ENCODE measurements at regions of chr7 and their contacts with region 1.

Region 1: DNA sequence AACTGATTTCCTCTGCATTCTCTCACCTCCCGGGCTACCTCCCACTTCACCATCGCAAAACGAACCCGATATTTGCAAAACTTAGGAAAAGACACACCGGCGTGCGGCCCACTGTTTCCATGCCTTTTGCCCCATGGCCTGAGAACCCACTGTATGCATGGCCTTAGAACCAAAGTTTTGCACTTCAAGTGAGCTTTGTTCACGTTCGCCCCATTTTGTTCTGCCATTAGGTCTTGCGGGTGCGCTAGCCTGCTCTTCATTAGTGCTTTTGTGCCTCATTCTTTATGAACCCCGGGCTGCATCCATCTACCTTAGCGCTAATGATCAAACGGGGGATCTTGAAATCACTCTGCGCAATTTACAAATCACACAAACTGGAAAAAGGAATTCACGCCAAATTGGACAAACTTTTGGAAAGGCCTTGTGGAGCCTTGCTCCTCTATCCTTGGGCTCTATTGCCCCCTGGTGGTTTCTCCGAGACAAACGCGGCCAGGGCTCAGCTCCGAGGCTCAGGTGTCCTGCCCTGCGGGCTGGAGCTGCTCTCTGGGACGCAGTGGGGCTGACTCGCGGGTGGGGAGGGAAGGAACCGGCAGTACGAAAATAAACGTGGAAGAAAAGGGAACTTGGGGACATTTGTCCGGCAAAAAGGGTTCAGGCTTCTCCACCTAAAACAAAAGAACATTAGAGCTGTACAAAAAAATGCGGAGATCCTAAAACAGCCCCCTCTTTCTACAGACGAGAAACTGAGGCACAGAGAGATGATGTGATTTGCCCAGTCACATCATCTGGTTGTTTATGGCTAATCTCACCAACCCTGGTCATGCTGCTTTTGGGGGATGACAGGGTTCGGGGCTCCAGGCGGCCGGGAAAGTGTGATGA is 300.4 kb upstream of the NFE2L3 start:
- DNase-seq: peak; percentile 95
- H3K4me3 ChIP-seq: peak overlapping the region; percentile 25
- H3K27ac ChIP-seq: peak overlapping the region; percentile 44
- H3K4me1 ChIP-seq: peaks cover 6% of the 10 kb centered on the region
- H3K27me3 ChIP-seq: peaks cover 8% of the 10 kb centered on the region
- CTCF ChIP-seq: peak; percentile 63

Region 2: GRCh38 chr7:25250386-25250785 is 601.2 kb before region 1 on chr7:
- intact Hi-C with region 1: loop called (anchors 5 kb)
- DNase-seq: no peak
- H3K4me3 ChIP-seq: no peak overlapping the region
- H3K27ac ChIP-seq: no peak overlapping the region
- H3K4me1 ChIP-seq: no peaks in the 10 kb centered on the region
- H3K27me3 ChIP-seq: no peaks in the 10 kb centered on the region
- CTCF ChIP-seq: no peak

Region 3: GRCh38 chr7:25565949-25566348 is 285.6 kb before region 1 on chr7:
- intact Hi-C with region 1: loop called (anchors 5 kb)
- DNase-seq: peak; percentile 69
- H3K4me3 ChIP-seq: no peak overlapping the region
- H3K27ac ChIP-seq: no peak overlapping the region
- H3K4me1 ChIP-seq: no peaks in the 10 kb centered on the region
- H3K27me3 ChIP-seq: no peaks in the 10 kb centered on the region
- CTCF ChIP-seq: peak; percentile 100

Region 4: DNA sequence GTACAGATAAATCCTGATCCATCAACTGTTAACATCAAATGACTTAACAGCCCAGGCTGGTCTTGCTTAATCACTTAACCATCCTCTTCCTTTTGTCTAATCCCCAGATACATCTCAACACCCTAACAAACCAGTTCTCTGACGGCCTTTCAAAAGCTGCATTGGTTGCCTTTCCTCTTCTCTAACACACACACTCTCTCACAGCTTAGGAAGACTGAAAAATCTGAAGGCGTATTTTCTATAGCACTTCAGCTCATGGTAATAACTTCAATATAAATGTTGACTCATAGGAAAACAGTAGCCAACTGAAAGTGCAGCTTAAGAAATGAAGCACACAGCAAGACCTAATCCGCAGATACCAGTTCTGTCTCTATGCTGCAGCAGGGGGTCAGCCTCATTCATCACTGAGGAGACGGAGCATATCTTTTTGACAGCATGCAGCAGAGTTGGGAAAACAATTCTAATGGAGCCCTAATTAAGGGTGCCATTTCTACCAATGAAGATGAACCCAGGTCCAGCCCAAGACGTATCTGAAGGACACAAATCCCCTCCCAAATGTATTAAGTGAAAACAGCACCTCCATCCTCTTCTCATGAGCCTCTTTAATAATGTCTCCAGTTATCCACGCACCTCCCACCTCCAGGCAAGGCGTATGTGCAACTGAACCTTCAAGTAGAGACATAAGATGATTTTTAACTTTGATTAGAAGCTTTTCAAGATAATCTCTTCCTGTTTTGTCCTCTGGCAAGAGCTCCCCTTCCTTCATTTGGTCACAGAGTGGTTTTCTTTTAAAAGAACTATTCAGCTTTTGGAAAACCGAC is 88.7 kb after region 1 on chr7:
- intact Hi-C with region 1: no loop called
- DNase-seq: no peak
- H3K4me3 ChIP-seq: no peak overlapping the region
- H3K27ac ChIP-seq: peak overlapping the region; percentile 73
- H3K4me1 ChIP-seq: no peaks in the 10 kb centered on the region
- H3K27me3 ChIP-seq: no peaks in the 10 kb centered on the region
- CTCF ChIP-seq: no peak

Region 5: GRCh38 chr7:27160546-27161213 is 1309.1 kb after region 1 on chr7:
- intact Hi-C with region 1: loop called (anchors 5 kb)
- DNase-seq: peak; percentile 91
- H3K4me3 ChIP-seq: peak overlapping the region; percentile 64
- H3K27ac ChIP-seq: peak overlapping the region; percentile 94
- H3K4me1 ChIP-seq: peaks cover 5% of the 10 kb centered on the region
- H3K27me3 ChIP-seq: peaks cover 4% of the 10 kb centered on the region
- CTCF ChIP-seq: peak; percentile 99

Measured in colonic mucosa (tissue), 4 donors.